ENCODE measurements at regions of chr10 and their contacts with region 1.

Region 1: GRCh38 chr10:118950190-118950680 is 79.3 kb upstream of the NANOS1 start:
- DNase-seq: no peak
- H3K4me3 Mint-ChIP-seq: no peak overlapping the region
- H3K27ac Mint-ChIP-seq: no peak overlapping the region
- H3K4me1 Mint-ChIP-seq: peaks cover 18% of the 10 kb centered on the region
- H3K27me3 Mint-ChIP-seq: no peaks in the 10 kb centered on the region
- CTCF ChIP-seq: no peak

Region 2: GRCh38 chr10:117107238-117107637 is 1843.0 kb before region 1 on chr10:
- CTCF ChIA-PET with region 1: interaction called, 10 read pairs
- intact Hi-C with region 1: no loop called
- DNase-seq: no peak
- H3K4me3 Mint-ChIP-seq: no peak overlapping the region
- H3K27ac Mint-ChIP-seq: no peak overlapping the region
- H3K4me1 Mint-ChIP-seq: no peaks in the 10 kb centered on the region
- H3K27me3 Mint-ChIP-seq: peaks cover 12% of the 10 kb centered on the region
- CTCF ChIP-seq: no peak

Region 3: DNA sequence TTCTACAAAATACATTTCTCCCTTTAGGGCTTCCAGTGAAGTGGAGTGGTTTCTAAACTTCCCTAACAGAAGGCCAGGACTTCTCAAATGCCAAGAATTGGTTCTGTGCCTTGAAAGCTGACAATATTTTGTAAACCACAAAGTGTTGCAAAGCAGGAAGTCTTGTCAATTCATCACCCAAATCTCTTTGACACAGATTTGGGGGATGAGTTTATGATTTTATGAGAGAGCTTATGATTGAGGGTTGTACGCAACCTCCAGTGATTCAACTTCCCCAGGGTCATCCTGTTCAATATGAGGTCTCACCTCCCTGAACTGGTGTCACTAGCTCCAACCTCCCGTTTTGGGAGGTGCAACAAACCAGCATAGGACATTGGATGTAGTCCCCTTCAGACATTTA is 438.5 kb before region 1 on chr10:
- CTCF ChIA-PET with region 1: no interaction called
- intact Hi-C with region 1: no loop called
- DNase-seq: no peak
- H3K4me3 Mint-ChIP-seq: no peak overlapping the region
- H3K27ac Mint-ChIP-seq: no peak overlapping the region
- H3K4me1 Mint-ChIP-seq: no peaks in the 10 kb centered on the region
- H3K27me3 Mint-ChIP-seq: peaks cover 8% of the 10 kb centered on the region
- CTCF ChIP-seq: no peak